CD8-positive, alpha-beta memory T cell (primary cell): ENCODE measurements at regions of chr4 and their contacts with region 1.

Region 1: GRCh38 chr4:89254847-89255246 is 52.8 kb downstream of the GPRIN3 start:
- DNase-seq: peak; percentile 20 to 64 (median 39)
- H3K4me3 ChIP-seq: no peak overlapping the region
- H3K4me3 Mint-ChIP-seq: peak overlapping the region in 3 of 7 donors; percentile 11 to 33 (median 18)
- H3K27ac ChIP-seq: no peak overlapping the region
- H3K27ac Mint-ChIP-seq: peak overlapping the region; percentile 81 to 97 (median 89)
- H3K4me1 ChIP-seq: peaks cover 50% of the 10 kb centered on the region
- H3K4me1 Mint-ChIP-seq: peaks cover 81 to 97% (median 94%) of the 10 kb centered on the region in 3 donors
- H3K27me3 ChIP-seq: no peaks in the 10 kb centered on the region
- H3K27me3 Mint-ChIP-seq: peaks cover 0 to 3% of the 10 kb centered on the region in 2 donors

Region 2: DNA sequence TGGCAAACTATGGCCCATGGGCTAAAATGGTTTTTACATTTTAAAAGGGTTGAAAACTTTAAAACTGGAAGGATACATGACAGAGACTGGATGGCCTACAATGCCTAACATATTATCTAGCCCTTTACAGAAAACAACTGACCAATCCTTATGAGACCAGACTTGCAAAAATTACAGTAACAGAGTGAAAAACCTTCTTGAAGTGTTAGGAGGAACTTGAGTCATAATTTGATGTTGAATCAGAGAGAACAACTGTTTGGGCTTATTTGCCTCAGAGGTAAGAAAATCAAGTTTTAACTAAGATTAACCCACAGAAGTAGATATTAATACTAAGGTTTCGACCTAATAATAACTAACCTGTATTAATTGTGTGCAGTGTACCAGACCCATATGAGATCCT is 544.9 kb before region 1 on chr4:
- CTCF ChIA-PET with region 1: no interaction called
- POLR2A ChIA-PET with region 1: no interaction called
- DNase-seq: no peak
- H3K4me3 ChIP-seq: no peak overlapping the region
- H3K4me3 Mint-ChIP-seq: no peak overlapping the region
- H3K27ac ChIP-seq: no peak overlapping the region
- H3K27ac Mint-ChIP-seq: peak overlapping the region in 2 of 8 donors; percentile 0 to 44
- H3K4me1 ChIP-seq: no peaks in the 10 kb centered on the region
- H3K4me1 Mint-ChIP-seq: peaks cover 2 to 5% (median 3%) of the 10 kb centered on the region in 3 donors
- H3K27me3 ChIP-seq: no peaks in the 10 kb centered on the region
- H3K27me3 Mint-ChIP-seq: peaks cover 0 to 2% of the 10 kb centered on the region in 2 donors

Region 3: DNA sequence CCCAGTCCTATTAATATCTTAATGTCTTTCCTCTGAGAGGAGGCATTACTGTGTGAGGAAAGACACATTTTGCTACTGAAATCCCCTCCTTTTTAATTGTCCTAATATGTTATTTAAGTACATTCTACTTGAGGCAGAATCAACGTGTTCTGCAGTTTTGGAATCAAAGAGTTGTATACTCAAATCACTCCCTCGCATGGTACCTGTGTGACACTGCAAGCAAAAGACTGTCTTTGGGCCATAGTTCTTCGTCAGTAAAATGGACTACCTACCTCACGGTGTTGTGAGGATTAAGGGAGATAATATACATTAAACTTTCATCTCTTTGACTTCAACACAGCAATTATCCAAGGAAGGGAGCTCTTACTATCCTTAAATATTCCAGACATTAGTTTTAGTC is 82.0 kb before region 1 on chr4:
- CTCF ChIA-PET with region 1: no interaction called
- POLR2A ChIA-PET with region 1: no interaction called
- DNase-seq: no peak
- H3K4me3 ChIP-seq: no peak overlapping the region
- H3K4me3 Mint-ChIP-seq: no peak overlapping the region
- H3K27ac ChIP-seq: no peak overlapping the region
- H3K27ac Mint-ChIP-seq: no peak overlapping the region
- H3K4me1 ChIP-seq: no peaks in the 10 kb centered on the region
- H3K4me1 Mint-ChIP-seq: no peaks in the 10 kb centered on the region
- H3K27me3 ChIP-seq: no peaks in the 10 kb centered on the region
- H3K27me3 Mint-ChIP-seq: peaks cover 4 to 14% of the 10 kb centered on the region in 2 donors

Region 4: DNA sequence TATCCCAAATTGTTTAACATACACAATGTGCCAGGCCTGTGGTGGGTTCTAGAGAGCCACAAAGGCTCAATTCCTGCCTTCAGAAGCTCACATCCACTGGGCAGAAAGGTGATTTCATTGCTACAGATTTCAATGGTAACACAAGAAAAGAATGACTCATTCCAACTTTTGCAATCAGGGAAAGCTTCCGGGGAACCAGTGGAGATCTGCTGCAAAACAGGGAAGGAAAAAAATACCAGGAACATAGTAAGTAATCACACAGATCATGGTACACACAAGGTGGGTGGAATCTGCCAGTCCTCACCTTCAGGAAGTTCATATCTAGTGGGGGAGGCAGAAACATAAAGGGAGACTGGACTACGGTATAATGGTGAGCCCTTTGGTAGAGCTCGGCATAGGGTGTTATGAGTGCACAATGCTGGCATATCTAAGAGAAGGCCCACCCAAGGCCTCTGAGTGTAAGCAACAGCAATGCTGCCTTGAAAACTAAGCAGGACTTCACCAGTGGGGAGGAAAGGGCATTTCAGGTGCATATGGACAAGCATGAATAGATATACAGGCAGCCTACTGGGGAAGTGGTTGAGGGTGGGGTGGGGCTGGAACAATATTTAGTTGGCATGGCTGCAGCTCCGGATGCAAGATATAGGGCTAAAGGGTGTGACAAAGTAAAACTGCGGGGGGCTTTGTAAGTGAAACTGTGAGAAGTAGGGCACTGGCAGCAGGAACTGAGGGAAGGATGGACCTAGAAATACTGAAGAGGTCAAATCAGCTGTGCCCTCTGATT is 28.6 kb after region 1 on chr4:
- CTCF ChIA-PET with region 1: interaction called, 10 read pairs
- POLR2A ChIA-PET with region 1: interaction called, 6 read pairs
- DNase-seq: peak; percentile 52 to 88 (median 62)
- H3K4me3 ChIP-seq: peak overlapping the region; percentile 50
- H3K4me3 Mint-ChIP-seq: peak overlapping the region in 6 of 7 donors; percentile 79 to 86 (median 83)
- H3K27ac ChIP-seq: peak overlapping the region; percentile 94
- H3K27ac Mint-ChIP-seq: peak overlapping the region in 2 of 8 donors; percentile 96 to 97
- H3K4me1 ChIP-seq: peaks cover 81% of the 10 kb centered on the region
- H3K4me1 Mint-ChIP-seq: peaks cover 0 to 37% (median 32%) of the 10 kb centered on the region in 3 donors
- H3K27me3 ChIP-seq: no peaks in the 10 kb centered on the region
- H3K27me3 Mint-ChIP-seq: no peaks in the 10 kb centered on the region

Region 5: DNA sequence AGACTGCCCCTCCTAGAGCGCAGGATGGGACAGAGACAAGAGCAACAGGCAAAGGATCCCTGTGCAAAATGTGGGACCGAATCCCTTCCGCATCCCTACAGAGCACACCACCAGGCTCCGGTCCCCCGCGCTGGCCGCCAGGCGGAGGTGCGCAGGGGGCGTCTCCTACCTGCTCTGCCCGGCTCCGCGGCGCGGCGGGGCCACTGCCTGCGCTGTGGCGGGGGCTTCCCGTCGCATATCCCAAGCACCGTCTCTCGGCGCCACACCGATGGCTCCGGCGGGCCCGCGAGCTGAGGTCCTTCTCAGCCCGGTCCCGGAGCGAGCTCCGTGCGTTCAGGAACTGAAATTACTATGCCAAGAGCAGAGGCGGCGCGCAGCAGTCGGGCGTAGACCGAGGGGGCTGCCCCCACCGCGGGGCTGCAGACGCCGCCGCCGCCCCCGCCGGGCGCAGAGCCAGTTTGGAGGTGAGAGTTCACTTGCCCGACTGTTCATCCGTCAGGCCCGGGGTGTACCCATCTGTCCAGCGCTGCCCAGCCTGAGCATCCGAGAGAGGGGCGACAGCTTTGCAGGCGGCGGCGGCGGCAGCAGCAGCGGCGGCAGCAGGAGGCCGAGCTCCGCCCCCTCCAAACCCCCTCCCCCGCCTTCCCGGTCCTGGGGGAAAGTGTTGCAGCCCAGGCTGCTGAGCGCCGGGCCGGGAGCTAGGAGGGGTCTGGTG is 52.8 kb after region 1 on chr4 and contains the start of gene GPRIN3:
- CTCF ChIA-PET with region 1: interaction called, 23 read pairs
- POLR2A ChIA-PET with region 1: interaction called, 3 read pairs
- DNase-seq: peak; percentile 55 to 83 (median 69)
- H3K4me3 ChIP-seq: peak within 1 kb of the TSS; percentile 84
- H3K4me3 Mint-ChIP-seq: peak within 1 kb of the TSS; percentile 89 to 98 (median 96)
- H3K27ac ChIP-seq: peak within 1 kb of the TSS; percentile 80
- H3K27ac Mint-ChIP-seq: peak within 1 kb of the TSS; percentile 88 to 100 (median 97)
- H3K4me1 ChIP-seq: peaks cover 35% of the 10 kb centered on the region
- H3K4me1 Mint-ChIP-seq: peaks cover 47 to 67% (median 60%) of the 10 kb centered on the region in 3 donors
- H3K27me3 ChIP-seq: no peaks in the 10 kb centered on the region
- H3K27me3 Mint-ChIP-seq: no peaks in the 10 kb centered on the region
- total RNA-seq, gene GPRIN3: 15.6 to 16.2 TPM

Region 6: DNA sequence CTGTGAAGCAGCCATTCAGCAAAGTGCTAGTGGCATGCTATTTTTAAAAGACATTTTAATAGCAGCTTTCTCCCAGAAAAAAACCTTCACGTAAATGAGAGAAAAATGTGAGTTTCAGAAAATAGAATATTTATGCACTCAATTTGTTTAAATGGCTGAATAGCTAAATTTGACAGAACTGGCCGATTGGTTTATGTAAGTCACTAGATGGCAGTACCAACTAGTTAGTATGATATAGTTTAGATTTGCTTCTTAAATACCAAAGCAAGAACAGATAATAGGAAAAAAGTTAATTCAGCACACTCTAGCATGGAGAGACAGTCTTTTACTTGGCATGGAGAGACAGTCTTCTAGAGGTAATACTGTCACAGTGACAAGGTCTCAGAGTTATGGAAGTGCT is 332.0 kb after region 1 on chr4:
- CTCF ChIA-PET with region 1: no interaction called
- POLR2A ChIA-PET with region 1: no interaction called
- DNase-seq: no peak
- H3K4me3 ChIP-seq: no peak overlapping the region
- H3K4me3 Mint-ChIP-seq: no peak overlapping the region
- H3K27ac ChIP-seq: no peak overlapping the region
- H3K27ac Mint-ChIP-seq: no peak overlapping the region
- H3K4me1 ChIP-seq: no peaks in the 10 kb centered on the region
- H3K4me1 Mint-ChIP-seq: no peaks in the 10 kb centered on the region
- H3K27me3 ChIP-seq: no peaks in the 10 kb centered on the region
- H3K27me3 Mint-ChIP-seq: peaks cover 1 to 17% of the 10 kb centered on the region in 2 donors